ENCODE measurements at regions of chrX and their contacts with region 1.

Region 1: GRCh38 chrX:39149761-39150160 is 348.5 kb downstream of the MID1IP1 start:
- DNase-seq: peak; percentile 93

Region 2: GRCh38 chrX:38774249-38774648 is 375.5 kb before region 1 on chrX:
- intact Hi-C with region 1: loop called in 1 of 2 experiments (anchors 10 kb)
- DNase-seq: no peak

Region 3: GRCh38 chrX:39096599-39096998 is 53.2 kb before region 1 on chrX:
- intact Hi-C with region 1: no loop called
- DNase-seq: no peak

Region 4: GRCh38 chrX:39174772-39175417 is 25.1 kb after region 1 on chrX:
- intact Hi-C with region 1: no loop called
- DNase-seq: no peak

Region 5: GRCh38 chrX:39189431-39189830 is 39.7 kb after region 1 on chrX:
- intact Hi-C with region 1: no loop called
- DNase-seq: no peak

Measured in posterior vena cava (tissue), 2 donors.